Common myeloid progenitor, CD34-positive (primary cell): ENCODE measurements at regions of chr1 and their contacts with region 1.

Region 1: GRCh38 chr1:160291248-160292220 is 6.6 kb upstream of the PEX19 start:
- DNase-seq: peak; percentile 71 to 90 (median 86)
- H3K4me3 ChIP-seq: no peak overlapping the region
- H3K27ac ChIP-seq: no peak overlapping the region
- H3K4me1 ChIP-seq: no peaks in the 10 kb centered on the region
- H3K27me3 ChIP-seq: no peaks in the 10 kb centered on the region

Region 2: GRCh38 chr1:160098852-160099561 is 192.5 kb before region 1 on chr1:
- CTCF ChIA-PET with region 1: interaction called, 63 read pairs
- POLR2A ChIA-PET with region 1: no interaction called
- DNase-seq: peak; percentile 92 to 96 (median 95)
- H3K4me3 ChIP-seq: peak overlapping the region; percentile 37 to 89 (median 71)
- H3K27ac ChIP-seq: peak overlapping the region; percentile 41 to 87
- H3K4me1 ChIP-seq: peaks cover 0 to 48% (median 35%) of the 10 kb centered on the region in 4 experiments
- H3K27me3 ChIP-seq: no peaks in the 10 kb centered on the region

Region 3: DNA sequence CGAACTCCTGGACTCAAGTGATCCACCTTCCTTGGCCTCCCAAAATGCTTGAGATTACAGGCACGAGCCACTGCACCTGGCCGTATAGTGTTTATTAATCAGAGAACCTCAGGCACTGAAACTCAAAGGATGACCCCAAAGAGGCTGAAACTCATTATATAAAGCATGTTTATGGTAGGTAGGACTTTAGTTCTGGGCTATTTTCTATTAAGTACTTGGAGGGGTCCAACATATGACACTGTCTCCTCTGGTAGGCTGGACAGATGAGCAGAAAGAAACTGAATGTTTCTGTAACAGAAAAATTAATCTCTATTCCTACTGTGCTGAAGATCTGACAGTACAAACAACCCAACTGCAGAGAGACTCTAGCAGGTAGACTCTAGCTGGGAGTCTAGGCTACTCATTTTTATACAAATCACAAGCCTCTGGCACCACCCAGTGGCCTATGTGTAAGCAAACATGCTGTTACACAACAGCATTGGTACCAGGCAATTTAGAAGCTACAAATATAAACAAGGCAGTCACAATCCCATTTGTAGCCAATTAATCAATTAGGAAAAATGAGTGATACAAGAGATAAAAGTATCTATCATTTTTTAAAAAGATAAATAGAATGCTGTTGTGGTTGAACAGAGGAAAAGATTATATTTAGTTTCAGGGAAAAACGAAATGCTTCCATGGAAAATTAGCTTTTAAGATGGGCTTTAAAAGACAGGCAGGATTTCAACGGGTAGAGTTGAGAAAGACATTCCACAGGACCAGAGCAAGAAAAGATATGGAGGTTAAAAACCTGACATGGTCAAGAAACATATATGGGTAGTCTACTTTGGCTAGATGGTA is 39.6 kb before region 1 on chr1:
- CTCF ChIA-PET with region 1: interaction called, 12 read pairs
- POLR2A ChIA-PET with region 1: no interaction called
- DNase-seq: peak; percentile 74 to 87 (median 84)
- H3K4me3 ChIP-seq: no peak overlapping the region
- H3K27ac ChIP-seq: peak overlapping the region; percentile 36 to 51
- H3K4me1 ChIP-seq: peaks cover 0 to 8% (median 0%) of the 10 kb centered on the region in 4 experiments
- H3K27me3 ChIP-seq: no peaks in the 10 kb centered on the region

Region 4: GRCh38 chr1:160267284-160267991 is 24.1 kb before region 1 on chr1:
- CTCF ChIA-PET with region 1: interaction called, 59 read pairs
- POLR2A ChIA-PET with region 1: interaction called, 3 read pairs
- DNase-seq: no peak
- H3K4me3 ChIP-seq: no peak overlapping the region
- H3K27ac ChIP-seq: no peak overlapping the region
- H3K4me1 ChIP-seq: peaks cover 0 to 7% (median 5%) of the 10 kb centered on the region in 4 experiments
- H3K27me3 ChIP-seq: no peaks in the 10 kb centered on the region

Region 5: DNA sequence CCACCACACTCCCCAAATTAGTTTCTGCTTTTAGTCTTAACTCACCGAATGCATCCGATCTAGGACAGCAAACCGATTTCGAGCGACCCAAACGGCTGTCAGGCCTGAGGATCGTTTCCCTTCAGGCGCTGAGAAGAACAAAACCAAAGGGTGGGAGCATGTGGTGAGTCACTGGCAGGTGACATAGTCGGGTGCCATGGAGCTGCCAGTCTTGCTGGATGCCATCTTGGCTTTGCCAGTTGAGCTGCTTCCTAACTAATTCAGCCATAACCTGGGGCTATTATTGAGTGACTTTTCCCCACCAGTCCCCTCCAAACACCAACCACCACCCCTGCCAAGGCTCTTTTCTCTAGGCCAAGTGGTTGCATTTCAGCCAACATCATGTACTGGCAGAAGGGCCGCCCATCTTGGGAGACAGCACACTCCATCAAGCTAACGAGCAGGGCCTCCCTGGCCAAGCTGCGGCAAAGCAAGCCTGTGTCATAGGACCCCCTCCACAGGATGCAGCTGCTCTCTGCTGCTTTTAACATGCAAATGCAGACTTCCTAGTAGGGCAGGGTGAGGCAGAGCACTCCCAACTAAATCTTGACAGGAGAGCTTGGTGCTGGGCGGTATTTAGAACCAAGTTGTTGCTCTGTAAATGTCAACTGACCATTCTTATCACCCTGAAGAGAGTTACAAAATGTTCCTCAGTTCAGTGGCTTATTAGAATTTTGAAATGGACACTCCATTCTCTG is 15.8 kb after region 1 on chr1:
- CTCF ChIA-PET with region 1: interaction called, 37 read pairs
- POLR2A ChIA-PET with region 1: no interaction called
- DNase-seq: peak; percentile 38 to 90 (median 53)
- H3K4me3 ChIP-seq: no peak overlapping the region
- H3K27ac ChIP-seq: peak overlapping the region in 1 of 2 experiments; percentile 21
- H3K4me1 ChIP-seq: no peaks in the 10 kb centered on the region
- H3K27me3 ChIP-seq: no peaks in the 10 kb centered on the region

Region 6: GRCh38 chr1:160376525-160377131 is 85.1 kb after region 1 on chr1:
- CTCF ChIA-PET with region 1: interaction called, 62 read pairs
- POLR2A ChIA-PET with region 1: interaction called, 5 read pairs
- DNase-seq: peak; percentile 76 to 87 (median 85)
- H3K4me3 ChIP-seq: peak overlapping the region in 3 of 7 experiments; percentile 4 to 49 (median 43)
- H3K27ac ChIP-seq: no peak overlapping the region
- H3K4me1 ChIP-seq: peaks cover 5 to 24% (median 20%) of the 10 kb centered on the region in 4 experiments
- H3K27me3 ChIP-seq: no peaks in the 10 kb centered on the region